A549 (cell line): ENCODE measurements at regions of chr11 and their contacts with region 1.

Region 1: DNA sequence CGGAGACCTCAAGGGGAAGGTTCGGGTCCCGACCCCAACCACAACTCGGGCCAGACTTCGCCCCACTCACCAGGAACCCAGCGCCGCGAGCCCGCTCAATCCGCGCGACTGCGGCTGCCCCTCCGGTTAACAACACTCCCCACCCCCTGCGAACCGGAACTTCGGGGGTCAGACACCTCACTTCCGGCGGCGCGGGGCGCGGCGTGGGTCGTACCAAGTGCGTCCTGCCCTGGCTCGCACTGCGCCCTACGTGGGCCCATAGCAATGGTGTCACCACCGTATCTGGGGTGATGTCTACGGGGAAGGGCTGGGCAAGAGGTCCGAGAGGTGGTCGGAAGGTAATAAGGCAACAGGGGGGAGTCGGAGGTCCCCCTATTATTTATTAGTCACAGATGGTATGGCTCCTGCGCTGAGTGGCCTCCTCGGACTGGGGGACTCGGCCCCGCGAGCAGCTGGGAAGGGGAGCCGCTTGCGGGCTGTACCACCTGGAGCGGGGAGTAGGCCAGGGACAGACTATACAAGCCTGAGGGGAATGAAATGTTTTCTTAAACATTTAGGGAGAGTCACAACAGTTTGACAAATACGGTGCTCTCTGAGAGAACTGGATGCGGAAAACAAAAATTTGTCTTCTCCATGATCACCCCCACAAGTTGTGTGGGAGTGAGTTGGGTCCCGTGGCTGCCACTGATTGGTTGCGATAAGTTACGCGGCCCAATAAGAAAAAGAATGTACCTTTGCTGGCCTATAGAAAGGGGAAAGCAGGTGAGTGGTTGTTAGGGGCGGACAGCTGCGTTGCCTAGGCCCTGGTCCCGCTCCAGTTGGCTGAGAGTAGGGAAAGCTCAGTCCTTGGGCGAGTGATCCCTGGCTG is at the start of gene SYVN1:
- DNase-seq: peak; percentile 98 to 99
- ATAC-seq: peak; percentile 90 to 93
- H3K4me3 ChIP-seq: peak within 1 kb of the TSS; percentile 89
- H3K27ac ChIP-seq: peak within 1 kb of the TSS; percentile 96 to 98
- H3K4me1 ChIP-seq: peaks cover 15% of the 10 kb centered on the region
- CTCF ChIP-seq: no peak
- EP300 ChIP-seq: no peak
- POLR2A ChIP-seq: peak; percentile 94
- RAD21 ChIP-seq: peak in 1 of 2 experiments; percentile 1; a peak in 1 of 5 replicates
- polyA plus RNA-seq, gene SYVN1: 21.4 and 50.4 TPM in 2 replicates

Region 2: GRCh38 chr11:65117216-65118096 is 17.2 kb before region 1 on chr11 and contains the start of gene ZNHIT2:
- CTCF ChIA-PET with region 1: interaction called, 75 read pairs
- POLR2A ChIA-PET with region 1: interaction called, 37 read pairs
- DNase-seq: peak; percentile 82 to 98
- ATAC-seq: peak; percentile 55 to 74
- H3K4me3 ChIP-seq: peak within 1 kb of the TSS; percentile 86
- H3K27ac ChIP-seq: peak within 1 kb of the TSS; percentile 93
- H3K4me1 ChIP-seq: peaks cover 34% of the 10 kb centered on the region; the same call in 2 of the 3 replicates
- CTCF ChIP-seq: peak; percentile 88
- EP300 ChIP-seq: no peak
- POLR2A ChIP-seq: peak; percentile 82
- RAD21 ChIP-seq: peak; percentile 80 to 83
- polyA plus RNA-seq, gene ZNHIT2: 5.5 and 6.0 TPM in 2 replicates

Region 3: DNA sequence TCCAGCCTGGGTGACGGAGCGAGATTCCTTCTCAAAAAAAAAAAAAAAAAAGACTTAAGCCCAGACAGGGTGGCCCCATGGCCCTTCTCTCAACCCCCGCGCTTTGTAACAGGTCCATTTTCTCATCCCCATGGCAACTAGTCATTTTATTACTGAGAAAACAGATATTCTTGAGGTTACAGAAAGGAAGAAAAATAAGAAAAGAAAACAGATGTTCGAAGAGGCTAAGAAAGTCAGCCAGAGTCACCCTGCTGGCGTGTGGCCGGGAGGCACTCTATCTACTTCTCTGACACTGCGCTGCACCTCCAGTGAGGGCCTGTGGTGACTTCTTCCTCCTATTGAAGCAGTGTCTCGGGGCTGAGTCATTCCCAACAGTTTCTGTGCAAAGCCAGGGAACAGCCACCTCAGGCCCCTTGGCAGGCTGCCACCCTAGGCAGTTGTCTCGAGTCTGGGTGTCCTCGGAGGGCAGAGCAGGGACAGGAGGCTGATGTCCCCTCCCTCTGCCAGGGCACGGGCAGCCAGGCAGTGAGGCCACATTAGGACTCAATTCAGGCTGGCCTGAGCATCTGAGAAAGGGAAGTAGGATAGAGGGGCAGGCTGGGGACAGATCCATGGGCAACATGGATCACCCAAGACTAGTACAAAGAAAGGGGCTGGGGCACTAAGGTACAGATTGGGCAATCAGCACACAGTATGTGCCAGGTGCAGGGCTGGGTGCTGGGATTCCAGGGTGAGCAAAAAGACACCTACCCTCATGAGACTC is 16.1 kb after region 1 on chr11:
- CTCF ChIA-PET with region 1: interaction called, 19 read pairs
- POLR2A ChIA-PET with region 1: interaction called, 15 read pairs
- DNase-seq: peak; percentile 89 to 95
- ATAC-seq: peak; percentile 97 to 99
- H3K4me3 ChIP-seq: no peak overlapping the region
- H3K27ac ChIP-seq: peak overlapping the region; percentile 76 to 82
- H3K4me1 ChIP-seq: peaks cover 19% of the 10 kb centered on the region
- CTCF ChIP-seq: no peak
- EP300 ChIP-seq: no peak
- POLR2A ChIP-seq: peak; percentile 14; the same call in 1 of the 2 replicates
- RAD21 ChIP-seq: no peak

Region 4: GRCh38 chr11:65180877-65181568 is 46.4 kb after region 1 on chr11:
- CTCF ChIA-PET with region 1: interaction called, 5 read pairs
- POLR2A ChIA-PET with region 1: interaction called, 28 read pairs
- DNase-seq: peak; percentile 76 to 77
- ATAC-seq: peak; percentile 83 to 85
- H3K4me3 ChIP-seq: peak overlapping the region; percentile 97
- H3K27ac ChIP-seq: peak overlapping the region; percentile 99
- H3K4me1 ChIP-seq: peaks cover 17% of the 10 kb centered on the region; the same call in 2 of the 3 replicates
- CTCF ChIP-seq: peak; percentile 52
- EP300 ChIP-seq: no peak
- POLR2A ChIP-seq: no peak
- RAD21 ChIP-seq: peak; percentile 63 to 75

Region 5: DNA sequence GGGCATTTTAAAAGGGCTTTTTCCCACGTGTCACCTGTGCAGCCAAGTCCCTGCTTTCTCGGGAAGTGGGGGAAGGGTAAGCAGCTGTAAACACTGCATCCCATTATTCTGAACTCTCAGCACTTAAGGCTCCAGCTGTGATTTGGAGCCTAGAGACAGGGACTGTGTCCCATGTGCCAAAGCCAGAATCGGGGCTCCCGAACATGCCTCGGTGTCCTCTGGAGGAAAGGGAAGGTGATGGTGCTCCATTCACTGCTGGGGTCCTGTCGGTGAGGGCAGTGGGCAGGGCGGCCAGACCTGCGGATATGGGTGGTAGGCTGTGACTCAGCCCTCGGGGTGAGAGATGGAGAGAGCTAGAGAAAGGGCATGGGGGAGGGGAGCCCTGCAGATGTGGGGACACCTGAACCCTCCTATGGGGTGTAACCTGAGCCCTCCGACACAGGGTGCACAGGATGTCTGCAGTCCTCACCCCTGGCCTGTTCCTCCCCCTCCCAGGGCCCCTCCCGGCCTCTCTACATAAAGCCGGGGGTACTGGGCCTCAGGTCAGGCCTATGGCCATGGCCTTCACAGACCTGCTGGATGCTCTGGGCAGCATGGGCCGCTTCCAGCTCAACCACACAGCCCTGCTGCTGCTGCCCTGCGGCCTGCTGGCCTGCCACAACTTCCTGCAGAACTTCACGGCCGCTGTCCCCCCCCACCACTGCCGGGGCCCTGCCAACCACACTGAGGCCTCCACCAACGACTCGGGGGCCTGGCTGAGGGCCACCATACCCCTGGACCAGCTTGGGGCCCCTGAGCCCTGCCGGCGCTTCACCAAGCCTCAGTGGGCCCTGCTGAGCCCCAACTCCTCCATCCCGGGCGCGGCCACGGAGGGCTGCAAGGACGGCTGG is 78.9 kb after region 1 on chr11:
- CTCF ChIA-PET with region 1: no interaction called
- POLR2A ChIA-PET with region 1: no interaction called
- DNase-seq: no peak
- ATAC-seq: peak in 1 of 2 experiments; percentile 32; a peak in 2 of 6 replicates
- H3K4me3 ChIP-seq: no peak overlapping the region
- H3K27ac ChIP-seq: no peak overlapping the region
- H3K4me1 ChIP-seq: no peaks in the 10 kb centered on the region
- CTCF ChIP-seq: no peak
- EP300 ChIP-seq: no peak
- POLR2A ChIP-seq: no peak
- RAD21 ChIP-seq: no peak